ENCODE measurements at regions of chr15 and their contacts with region 1.

Region 1: GRCh38 chr15:32943711-32944110 is 225.9 kb downstream of the GREM1 start:
- DNase-seq: no peak
- H3K4me3 ChIP-seq: no peak overlapping the region
- H3K27ac ChIP-seq: no peak overlapping the region
- H3K4me1 ChIP-seq: no peaks in the 10 kb centered on the region
- H3K27me3 ChIP-seq: no peaks in the 10 kb centered on the region
- CTCF ChIP-seq: no peak
- EP300 ChIP-seq: no peak
- POLR2A ChIP-seq: no peak
- RAD21 ChIP-seq: no peak

Region 2: DNA sequence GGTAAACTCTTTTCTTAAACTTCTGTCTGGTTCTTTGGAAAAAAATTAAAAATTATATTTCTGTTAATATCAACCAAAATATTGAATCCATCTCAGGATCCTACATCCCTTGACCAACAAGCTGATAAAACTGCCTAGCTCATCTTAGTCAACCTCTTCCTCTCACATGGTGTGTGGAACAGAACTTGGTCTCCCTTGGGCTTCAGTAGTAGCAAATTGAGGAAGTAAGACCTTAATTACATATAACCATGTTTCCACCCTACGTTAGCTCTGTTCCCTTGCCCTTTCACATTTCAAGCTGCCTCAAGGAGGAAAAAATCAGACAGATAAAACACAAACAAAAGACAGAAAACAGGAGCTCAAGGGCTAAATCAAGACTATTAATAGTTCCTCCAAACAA is 109.6 kb before region 1 on chr15:
- CTCF ChIA-PET with region 1: no interaction called
- POLR2A ChIA-PET with region 1: no interaction called
- DNase-seq: no peak
- H3K4me3 ChIP-seq: no peak overlapping the region
- H3K27ac ChIP-seq: no peak overlapping the region
- H3K4me1 ChIP-seq: peaks cover 0 to 2% (median 0%) of the 10 kb centered on the region in 4 experiments; a peak in 2 of 7 replicates
- H3K27me3 ChIP-seq: no peaks in the 10 kb centered on the region
- CTCF ChIP-seq: no peak
- EP300 ChIP-seq: no peak
- POLR2A ChIP-seq: no peak
- RAD21 ChIP-seq: no peak

Region 3: DNA sequence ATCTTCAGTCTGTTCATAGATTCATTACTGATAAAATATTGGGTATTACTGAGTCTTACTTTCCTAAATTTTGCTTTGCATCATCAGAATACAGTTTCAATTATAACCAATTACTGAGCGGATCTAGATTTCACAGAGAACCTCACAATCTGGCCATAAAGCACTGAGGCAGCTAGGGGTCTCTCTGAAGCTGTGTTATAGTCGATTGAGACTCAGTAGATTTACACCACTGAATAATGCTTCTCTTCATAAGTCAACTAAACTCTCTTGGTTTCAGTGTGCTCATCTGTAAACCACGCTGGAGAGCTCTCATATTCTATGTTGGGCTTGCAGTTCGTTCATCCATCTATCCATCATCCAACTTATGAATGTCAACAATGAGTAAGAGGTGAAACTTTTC is 45.3 kb before region 1 on chr15:
- CTCF ChIA-PET with region 1: no interaction called
- POLR2A ChIA-PET with region 1: no interaction called
- DNase-seq: no peak
- H3K4me3 ChIP-seq: peak overlapping the region in 1 of 4 experiments; percentile 36; a peak in 1 of 8 replicates
- H3K27ac ChIP-seq: no peak overlapping the region
- H3K4me1 ChIP-seq: peaks cover 2 to 13% (median 4%) of the 10 kb centered on the region in 4 experiments; a peak in 4 of 7 replicates
- H3K27me3 ChIP-seq: no peaks in the 10 kb centered on the region; a peak in 1 of 7 replicates
- CTCF ChIP-seq: peak in 2 of 3 experiments; percentile 20 to 22; a peak in 2 of 4 replicates
- EP300 ChIP-seq: no peak
- POLR2A ChIP-seq: no peak
- RAD21 ChIP-seq: peak; percentile 46 to 53

Region 4: DNA sequence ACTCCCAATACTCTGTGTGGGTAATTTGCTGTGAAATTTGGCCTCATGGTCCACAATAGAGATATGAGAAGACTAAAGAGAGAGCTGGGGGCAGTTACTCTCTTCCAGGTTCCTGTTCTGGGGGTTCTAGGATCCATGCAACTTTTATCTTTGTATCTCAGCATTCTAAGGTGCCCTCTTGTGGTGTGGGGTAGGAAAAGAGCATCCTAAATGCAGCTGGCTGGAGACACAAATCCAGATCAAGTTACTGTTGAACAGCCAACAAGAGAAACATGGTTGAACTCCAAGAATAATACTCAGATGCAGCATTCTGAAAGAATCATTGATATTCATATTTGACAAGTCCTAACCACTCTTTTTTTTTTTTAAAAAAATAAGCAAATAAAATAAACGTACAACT is 12.3 kb after region 1 on chr15:
- CTCF ChIA-PET with region 1: interaction called, 15 read pairs
- POLR2A ChIA-PET with region 1: no interaction called
- DNase-seq: no peak
- H3K4me3 ChIP-seq: no peak overlapping the region
- H3K27ac ChIP-seq: no peak overlapping the region
- H3K4me1 ChIP-seq: peaks cover 7 to 17% (median 14%) of the 10 kb centered on the region in 4 experiments; a peak in 6 of 7 replicates
- H3K27me3 ChIP-seq: no peaks in the 10 kb centered on the region
- CTCF ChIP-seq: peak in 2 of 3 experiments; percentile 65 to 74; a peak in 3 of 4 replicates
- EP300 ChIP-seq: no peak
- POLR2A ChIP-seq: no peak
- RAD21 ChIP-seq: peak; percentile 70 to 88